ENCODE measurements at regions of chr15 and their contacts with region 1.

Region 1: DNA sequence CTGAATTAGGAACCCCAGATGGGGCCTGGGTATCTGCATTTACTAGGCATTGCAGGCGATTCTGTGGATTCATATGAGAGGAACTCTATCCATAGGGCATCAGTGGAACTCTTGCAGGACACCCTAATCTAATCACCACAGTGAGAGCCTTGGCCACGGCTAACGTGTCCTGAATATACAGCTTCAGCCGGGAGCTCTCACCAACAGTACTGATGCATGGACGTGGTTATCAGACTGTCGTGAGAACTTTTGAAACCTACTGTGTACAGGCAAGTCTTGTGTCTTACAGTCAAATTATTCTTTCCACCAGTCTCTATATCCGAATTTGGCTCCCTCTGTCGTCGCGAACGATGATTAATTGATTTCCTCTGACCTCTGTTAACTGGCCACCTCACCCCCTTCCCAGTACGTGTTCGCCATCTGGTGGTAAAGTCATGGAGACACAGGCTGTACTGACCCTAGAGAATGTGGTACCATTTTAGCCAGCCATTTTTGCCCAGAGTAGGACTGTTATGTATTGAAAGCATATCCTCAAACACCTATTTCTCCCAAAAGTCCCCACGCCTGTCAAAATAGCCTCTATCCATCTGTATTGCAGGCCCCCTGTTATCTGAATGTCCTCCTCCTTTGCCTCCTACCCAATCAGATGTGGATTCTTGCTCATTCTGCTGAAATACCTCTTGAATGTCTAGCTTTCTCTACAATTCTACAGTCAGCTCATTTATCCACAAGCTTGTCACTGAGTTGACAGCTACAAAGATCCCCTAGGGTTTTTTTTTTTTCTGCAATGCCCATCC is 39.7 kb downstream of the GLDN start:
- DNase-seq: peak; percentile 57 to 71 (median 58)
- ATAC-seq: peak; percentile 84
- H3K4me3 ChIP-seq: no peak overlapping the region
- H3K27ac ChIP-seq: no peak overlapping the region
- H3K4me1 ChIP-seq: peaks cover 19% of the 10 kb centered on the region
- H3K27me3 ChIP-seq: no peaks in the 10 kb centered on the region
- CTCF ChIP-seq: peak; percentile 64 to 97 (median 86)
- POLR2A ChIP-seq: no peak

Region 2: DNA sequence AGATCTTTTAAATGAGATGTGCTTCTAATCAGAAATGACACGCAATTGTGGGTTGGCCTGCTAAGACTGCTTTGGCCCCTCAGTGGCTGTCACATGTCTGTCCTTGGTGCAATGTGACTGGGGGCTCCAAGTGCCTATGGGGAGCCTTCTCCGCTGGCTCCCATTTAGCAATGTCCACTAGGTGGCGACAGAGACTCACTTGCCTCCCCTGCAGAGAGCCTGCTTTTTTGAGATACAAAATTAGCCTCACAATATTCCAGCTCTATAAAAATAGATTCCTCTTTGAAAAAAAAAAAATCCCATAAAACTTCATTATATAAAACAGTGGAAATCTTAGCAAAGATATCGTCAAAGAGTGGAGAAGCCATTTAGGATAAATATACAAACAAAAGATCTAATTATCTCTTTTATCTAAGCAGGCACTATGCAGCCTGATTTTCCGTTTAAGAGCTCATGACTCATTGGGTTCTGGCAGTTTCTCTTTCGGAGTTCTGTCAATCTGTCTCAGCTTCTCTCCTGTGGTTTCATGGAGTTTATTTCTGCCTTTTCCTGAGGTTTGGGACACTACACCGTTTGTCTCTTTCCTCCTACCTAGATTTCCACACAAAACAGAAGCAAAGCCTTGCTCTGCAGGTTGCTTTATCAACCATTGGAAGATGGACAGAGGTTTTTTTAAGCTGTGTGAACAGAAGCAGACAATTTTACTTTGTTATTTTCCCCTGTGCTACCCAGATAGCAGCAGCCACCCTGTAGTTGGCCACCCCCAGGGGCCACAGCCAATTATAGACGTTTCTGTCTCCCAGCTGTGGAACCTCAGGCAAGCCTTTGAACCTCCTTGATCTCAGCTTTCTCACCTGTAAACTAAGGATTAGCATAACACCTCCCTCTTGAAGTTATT is 218.1 kb before region 1 on chr15:
- intact Hi-C with region 1: loop called (anchors 5 kb)
- DNase-seq: peak; percentile 64 to 74 (median 66)
- ATAC-seq: peak; percentile 64
- H3K4me3 ChIP-seq: no peak overlapping the region
- H3K27ac ChIP-seq: no peak overlapping the region
- H3K4me1 ChIP-seq: no peaks in the 10 kb centered on the region
- H3K27me3 ChIP-seq: peaks cover 0 to 7% of the 10 kb centered on the region in 2 donors
- CTCF ChIP-seq: peak; percentile 82 to 98 (median 83)
- POLR2A ChIP-seq: no peak

Region 3: DNA sequence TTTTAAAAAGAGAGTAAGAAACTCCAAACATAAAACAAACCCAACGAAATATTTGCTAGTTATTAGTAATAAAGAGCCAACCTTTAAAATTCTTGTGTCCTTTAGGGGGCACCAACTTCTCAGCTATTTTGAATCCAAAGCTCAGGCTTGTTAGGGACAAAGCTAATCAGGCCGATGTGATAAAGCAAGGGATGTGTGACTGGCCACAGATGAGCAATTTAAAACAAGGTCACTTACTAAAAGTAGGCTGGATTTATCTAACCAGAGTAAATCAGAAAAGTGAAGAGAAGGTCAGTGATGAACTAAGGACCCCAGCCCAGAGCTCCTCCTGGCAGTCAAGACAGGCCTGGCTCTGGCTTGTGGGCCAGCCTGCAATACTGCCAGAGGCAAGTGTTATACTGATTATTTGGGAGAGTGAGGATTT is 151.3 kb before region 1 on chr15:
- intact Hi-C with region 1: loop called (anchors 10 kb)
- DNase-seq: peak in 1 of 4 donors; percentile 33
- ATAC-seq: no peak
- H3K4me3 ChIP-seq: no peak overlapping the region
- H3K27ac ChIP-seq: no peak overlapping the region
- H3K4me1 ChIP-seq: no peaks in the 10 kb centered on the region
- H3K27me3 ChIP-seq: no peaks in the 10 kb centered on the region
- CTCF ChIP-seq: peak in 5 of 7 experiments; percentile 8 to 59 (median 44)
- POLR2A ChIP-seq: no peak

Measured in body of pancreas (tissue), 4 donors.